ENCODE measurements at regions of chr1 and their contacts with region 1.

Region 1: DNA sequence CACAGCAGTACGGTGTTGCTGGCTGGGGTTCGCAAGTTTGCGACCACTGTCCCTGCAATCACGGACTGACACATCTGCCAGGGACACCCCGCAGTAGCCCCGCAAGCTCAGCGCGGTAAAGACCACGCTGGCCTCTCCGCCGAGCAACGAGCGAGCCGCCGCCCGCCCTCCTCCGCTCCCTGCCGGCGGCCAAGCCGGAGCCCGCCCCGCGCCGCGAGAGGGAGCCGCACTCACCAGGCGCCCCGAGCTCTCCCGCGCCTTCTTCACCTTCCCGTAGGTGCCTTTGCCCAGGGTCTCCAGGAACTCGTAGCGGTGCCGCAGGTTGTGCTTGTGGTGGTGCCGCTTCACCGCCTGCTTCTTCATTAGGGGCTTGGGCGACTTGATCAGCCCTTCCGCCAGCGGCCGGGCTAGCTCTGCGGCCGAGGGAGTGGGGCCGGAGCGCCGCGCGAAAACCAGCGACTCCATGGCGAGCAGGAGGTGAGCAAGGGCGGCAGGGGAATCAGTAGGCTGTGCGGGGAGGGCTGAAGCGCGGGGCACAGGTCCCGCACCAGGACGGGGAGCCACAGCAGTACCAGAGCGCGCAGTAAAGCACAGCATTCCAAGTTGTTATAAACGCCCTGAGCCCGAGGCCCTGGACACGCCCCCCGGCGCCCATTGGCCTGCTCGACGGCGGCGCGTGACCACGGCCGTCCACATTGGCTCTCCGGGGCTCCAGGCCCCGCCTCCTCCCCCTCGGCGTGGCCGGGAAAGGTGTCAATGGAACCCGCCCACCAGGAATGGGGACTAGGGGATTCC is at the start of gene NUAK2:
- DNase-seq: peak; percentile 89
- H3K4me3 Mint-ChIP-seq: peak within 1 kb of the TSS; percentile 88
- H3K27ac Mint-ChIP-seq: peak within 1 kb of the TSS; percentile 72
- H3K4me1 Mint-ChIP-seq: peaks cover 60% of the 10 kb centered on the region
- H3K27me3 Mint-ChIP-seq: peaks cover 2% of the 10 kb centered on the region
- total RNA-seq, gene NUAK2: 4.4 to 4.5 TPM

Region 2: GRCh38 chr1:205273551-205273982 is 47.8 kb before region 1 on chr1:
- CTCF ChIA-PET with region 1: interaction called, 1,370 read pairs
- POLR2A ChIA-PET with region 1: interaction called, 14 read pairs
- intact Hi-C with region 1: loop called (anchors 1 kb)
- DNase-seq: peak; percentile 91
- H3K4me3 Mint-ChIP-seq: no peak overlapping the region
- H3K27ac Mint-ChIP-seq: no peak overlapping the region
- H3K4me1 Mint-ChIP-seq: peaks cover 30% of the 10 kb centered on the region
- H3K27me3 Mint-ChIP-seq: no peaks in the 10 kb centered on the region

Region 3: GRCh38 chr1:205294175-205294913 is 27.0 kb before region 1 on chr1:
- CTCF ChIA-PET with region 1: interaction called, 1,370 read pairs
- POLR2A ChIA-PET with region 1: interaction called, 19 read pairs
- intact Hi-C with region 1: no loop called
- DNase-seq: no peak
- H3K4me3 Mint-ChIP-seq: no peak overlapping the region
- H3K27ac Mint-ChIP-seq: no peak overlapping the region
- H3K4me1 Mint-ChIP-seq: peaks cover 38% of the 10 kb centered on the region
- H3K27me3 Mint-ChIP-seq: no peaks in the 10 kb centered on the region

Region 4: DNA sequence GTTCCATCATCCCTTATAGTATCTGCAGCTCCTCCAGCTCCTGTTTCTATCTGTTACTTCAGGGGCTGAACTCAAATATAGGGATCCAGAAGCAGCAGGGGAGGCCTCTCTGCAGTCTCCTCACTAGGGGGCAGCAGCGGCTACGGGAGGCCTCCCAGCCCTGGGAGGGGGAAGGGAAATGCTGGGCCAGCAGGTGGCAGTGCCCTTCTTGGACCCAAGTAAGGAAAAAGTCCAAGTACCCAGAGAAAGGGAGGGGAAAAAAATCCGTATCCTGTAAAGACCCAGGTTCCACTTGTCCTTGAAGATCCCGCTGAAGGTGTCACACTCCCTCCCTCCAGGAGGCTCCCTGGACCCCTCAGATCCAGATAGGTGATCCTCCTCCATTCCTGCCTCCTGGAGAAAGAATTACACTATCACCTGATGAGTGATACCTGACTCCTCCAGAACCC is 14.3 kb after region 1 on chr1:
- CTCF ChIA-PET with region 1: interaction called, 47 read pairs
- POLR2A ChIA-PET with region 1: no interaction called
- intact Hi-C with region 1: no loop called
- DNase-seq: peak; percentile 89
- H3K4me3 Mint-ChIP-seq: no peak overlapping the region
- H3K27ac Mint-ChIP-seq: no peak overlapping the region
- H3K4me1 Mint-ChIP-seq: peaks cover 3% of the 10 kb centered on the region
- H3K27me3 Mint-ChIP-seq: no peaks in the 10 kb centered on the region